ENCODE measurements at regions of chr1 and their contacts with region 1.

Region 1: DNA sequence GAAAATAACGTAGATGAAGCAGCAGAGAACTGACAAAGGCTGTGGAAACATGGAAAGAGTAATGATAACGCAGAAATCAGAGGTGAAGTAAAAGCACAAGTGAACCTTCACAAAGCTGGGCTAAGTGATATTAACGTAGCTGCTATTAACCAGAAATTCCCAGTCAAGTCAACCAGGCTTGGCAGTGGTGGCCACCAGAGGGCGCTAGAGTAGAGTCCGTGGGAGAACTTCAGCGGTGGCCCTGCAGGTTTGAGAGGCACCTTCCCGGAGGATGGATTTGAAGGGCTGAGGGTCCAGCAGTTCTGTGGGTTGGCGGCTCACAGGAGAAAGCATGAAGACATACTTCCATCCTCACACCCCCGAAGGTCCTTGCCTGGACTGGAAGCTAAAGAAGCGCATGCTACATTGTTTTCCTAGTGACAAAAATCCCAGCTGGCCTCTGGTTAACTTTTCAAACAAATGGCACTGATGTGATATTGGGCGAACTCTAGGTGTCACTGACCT is 81.7 kb upstream of the ZNF648 start:
- DNase-seq: peak; percentile 96
- H3K4me3 Mint-ChIP-seq: no peak overlapping the region
- H3K27ac Mint-ChIP-seq: no peak overlapping the region
- H3K4me1 Mint-ChIP-seq: peaks cover 47% of the 10 kb centered on the region
- H3K27me3 Mint-ChIP-seq: no peaks in the 10 kb centered on the region
- CTCF ChIP-seq: peak; percentile 93

Region 2: DNA sequence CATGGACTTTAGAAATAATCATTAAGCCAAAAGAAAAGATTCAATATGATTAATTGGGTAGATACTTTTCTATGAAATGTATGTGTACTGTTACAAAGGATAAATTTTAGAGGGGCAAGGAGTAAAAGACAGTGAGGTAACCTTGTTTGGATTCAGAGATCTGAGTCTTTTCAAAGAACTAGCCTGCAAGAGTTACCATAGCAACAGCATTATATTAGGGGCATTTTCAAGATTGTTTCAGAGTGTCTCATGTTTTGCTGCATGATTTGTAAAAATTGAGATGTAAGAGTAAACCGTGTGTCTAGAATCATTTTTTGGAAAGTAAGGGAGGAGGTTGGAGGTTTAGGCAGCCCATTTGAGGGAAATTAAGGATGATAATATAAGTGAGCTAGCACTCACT is 1301.2 kb before region 1 on chr1:
- CTCF ChIA-PET with region 1: no interaction called
- intact Hi-C with region 1: no loop called
- DNase-seq: no peak
- H3K4me3 Mint-ChIP-seq: no peak overlapping the region
- H3K27ac Mint-ChIP-seq: no peak overlapping the region
- H3K4me1 Mint-ChIP-seq: peaks cover 12% of the 10 kb centered on the region
- H3K27me3 Mint-ChIP-seq: no peaks in the 10 kb centered on the region
- CTCF ChIP-seq: no peak

Region 3: GRCh38 chr1:182101415-182102042 is 41.7 kb before region 1 on chr1:
- CTCF ChIA-PET with region 1: interaction called, 11 read pairs
- intact Hi-C with region 1: loop called (anchors 5 kb)
- DNase-seq: peak; percentile 91
- H3K4me3 Mint-ChIP-seq: peak overlapping the region; percentile 27
- H3K27ac Mint-ChIP-seq: peak overlapping the region; percentile 68
- H3K4me1 Mint-ChIP-seq: peaks cover 47% of the 10 kb centered on the region
- H3K27me3 Mint-ChIP-seq: no peaks in the 10 kb centered on the region
- CTCF ChIP-seq: no peak

Region 4: GRCh38 chr1:182185813-182186756 is 42.9 kb after region 1 on chr1:
- CTCF ChIA-PET with region 1: interaction called, 18 read pairs
- intact Hi-C with region 1: loop called (anchors 2 kb)
- DNase-seq: peak; percentile 37
- H3K4me3 Mint-ChIP-seq: no peak overlapping the region
- H3K27ac Mint-ChIP-seq: no peak overlapping the region
- H3K4me1 Mint-ChIP-seq: peaks cover 48% of the 10 kb centered on the region
- H3K27me3 Mint-ChIP-seq: no peaks in the 10 kb centered on the region
- CTCF ChIP-seq: no peak

Region 5: GRCh38 chr1:182198049-182198501 is 54.9 kb after region 1 on chr1:
- CTCF ChIA-PET with region 1: interaction called, 26 read pairs
- intact Hi-C with region 1: loop called (anchors 1 kb)
- DNase-seq: peak; percentile 16
- H3K4me3 Mint-ChIP-seq: no peak overlapping the region
- H3K27ac Mint-ChIP-seq: no peak overlapping the region
- H3K4me1 Mint-ChIP-seq: peaks cover 9% of the 10 kb centered on the region
- H3K27me3 Mint-ChIP-seq: no peaks in the 10 kb centered on the region
- CTCF ChIP-seq: no peak

Region 6: GRCh38 chr1:182301467-182302198 is 158.4 kb after region 1 on chr1:
- CTCF ChIA-PET with region 1: interaction called, 3 read pairs
- intact Hi-C with region 1: loop called (anchors 2 kb)
- DNase-seq: peak; percentile 57
- H3K4me3 Mint-ChIP-seq: no peak overlapping the region
- H3K27ac Mint-ChIP-seq: peak overlapping the region; percentile 43
- H3K4me1 Mint-ChIP-seq: peaks cover 31% of the 10 kb centered on the region
- H3K27me3 Mint-ChIP-seq: no peaks in the 10 kb centered on the region
- CTCF ChIP-seq: no peak

Region 7: GRCh38 chr1:182397771-182398393 is 254.7 kb after region 1 on chr1:
- CTCF ChIA-PET with region 1: interaction called, 37 read pairs
- intact Hi-C with region 1: loop called (anchors 1 kb)
- DNase-seq: peak; percentile 20
- H3K4me3 Mint-ChIP-seq: no peak overlapping the region
- H3K27ac Mint-ChIP-seq: peak overlapping the region; percentile 16
- H3K4me1 Mint-ChIP-seq: peaks cover 22% of the 10 kb centered on the region
- H3K27me3 Mint-ChIP-seq: no peaks in the 10 kb centered on the region
- CTCF ChIP-seq: no peak

Measured in Calu3 (cell line).